ENCODE measurements at regions of chr12 and their contacts with region 1.

Region 1: GRCh38 chr12:7207866-7208625 is 18.6 kb downstream of the PEX5 start:
- DNase-seq: no peak
- H3K4me3 ChIP-seq: no peak overlapping the region
- CTCF ChIP-seq: no peak

Region 2: GRCh38 chr12:6937481-6938297 is 270.4 kb before region 1 on chr12:
- in situ Hi-C with region 1: no loop called
- DNase-seq: peak; percentile 86
- H3K4me3 ChIP-seq: peak overlapping the region; percentile 47
- CTCF ChIP-seq: peak; percentile 98

Region 3: DNA sequence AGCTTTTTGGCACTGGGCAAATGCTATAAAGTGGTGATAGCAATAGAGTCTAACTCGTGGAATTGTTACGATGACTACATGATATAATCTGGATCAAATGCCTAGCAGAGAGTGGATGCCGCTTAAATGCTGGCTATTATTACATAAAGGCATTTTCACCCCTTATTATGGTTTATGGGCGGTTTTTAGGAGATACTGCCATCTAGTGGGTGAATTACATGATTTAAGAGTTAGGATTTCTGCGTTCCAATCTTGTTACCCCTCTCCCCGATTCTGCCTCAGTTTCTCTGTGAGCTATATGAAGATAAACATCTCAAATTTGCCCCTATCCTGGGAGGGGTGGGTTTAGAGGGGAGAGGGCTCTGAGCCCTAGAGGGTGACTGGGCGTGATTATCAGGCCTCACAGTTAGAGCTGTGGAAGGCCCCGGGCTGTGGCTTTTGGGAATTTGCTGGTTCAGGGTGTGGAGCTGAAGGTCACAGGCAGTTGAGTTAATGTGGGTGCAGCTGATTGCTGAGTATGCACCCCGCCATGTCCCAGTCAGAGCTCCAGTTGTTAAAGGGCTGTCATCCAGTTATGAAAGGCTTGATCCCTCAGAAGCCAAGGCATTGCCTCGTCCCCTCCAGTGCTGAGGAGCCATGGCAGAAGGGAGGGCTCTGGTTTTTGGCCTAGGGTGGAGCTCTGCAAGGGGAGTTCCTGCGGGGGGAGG is 63.5 kb before region 1 on chr12:
- in situ Hi-C with region 1: loop called (anchors 5 kb)
- DNase-seq: no peak
- H3K4me3 ChIP-seq: no peak overlapping the region
- CTCF ChIP-seq: peak; percentile 50